GM18951 (cell line): ENCODE measurements at regions of chr2 and their contacts with region 1.

Region 1: GRCh38 chr2:54634564-54635511 is 88.6 kb upstream of the EML6 start:
- POLR2A ChIP-seq: peak; percentile 40

Region 2: GRCh38 chr2:54279385-54279784 is 355.5 kb before region 1 on chr2:
- in situ Hi-C with region 1: no loop called
- POLR2A ChIP-seq: no peak

Region 3: DNA sequence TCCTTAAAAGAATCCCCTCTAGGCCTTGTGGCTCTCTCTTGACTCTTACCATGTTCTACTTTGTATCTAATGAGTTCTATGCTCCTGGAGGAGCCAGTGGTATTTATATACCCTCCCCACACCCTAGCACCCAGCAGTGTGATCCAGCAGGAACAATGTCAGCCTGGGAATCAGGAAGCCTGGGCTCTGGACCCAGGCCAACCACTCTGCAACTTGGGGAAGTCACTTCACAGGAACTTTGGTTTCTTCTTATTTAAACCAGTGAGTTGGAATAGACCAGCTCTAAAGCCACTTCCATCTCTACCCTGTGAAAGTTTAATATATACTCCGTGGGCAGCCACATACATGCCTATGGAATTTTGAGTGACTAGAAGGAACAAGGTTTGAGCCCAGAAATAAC is 190.3 kb before region 1 on chr2:
- in situ Hi-C with region 1: no loop called
- POLR2A ChIP-seq: no peak

Region 4: GRCh38 chr2:54570925-54571694 is 63.7 kb before region 1 on chr2:
- in situ Hi-C with region 1: loop called (anchors 10 kb)
- POLR2A ChIP-seq: peak; percentile 59

Region 5: DNA sequence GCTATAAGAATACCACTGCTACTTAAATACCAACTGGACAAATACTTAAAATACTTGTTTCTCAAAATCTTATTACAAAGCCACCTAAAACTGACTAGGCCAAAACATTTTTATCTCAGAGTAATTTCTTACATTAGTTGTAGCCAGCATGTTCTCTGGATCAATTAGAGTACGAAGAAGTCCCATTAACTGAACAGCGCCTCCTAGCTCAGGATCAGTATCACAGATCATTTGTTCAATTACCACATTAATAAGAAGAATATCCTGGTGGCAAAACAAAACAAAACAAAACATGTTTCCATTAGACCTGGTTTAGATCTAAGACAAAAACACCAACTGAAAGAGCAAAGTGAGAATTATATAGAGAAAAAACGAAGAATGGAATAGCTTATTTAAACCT is 946.6 kb after region 1 on chr2:
- in situ Hi-C with region 1: no loop called
- POLR2A ChIP-seq: no peak